ENCODE measurements at regions of chr7 and their contacts with region 1.

Region 1: GRCh38 chr7:90262438-90262837 is 17.5 kb downstream of the CFAP69 start:
- DNase-seq: peak; percentile 17 to 54 (median 52)
- H3K4me3 ChIP-seq: no peak overlapping the region
- H3K27ac ChIP-seq: no peak overlapping the region
- H3K4me1 ChIP-seq: no peaks in the 10 kb centered on the region
- H3K27me3 ChIP-seq: peaks cover 0 to 3% (median 0%) of the 10 kb centered on the region in 5 experiments

Region 2: GRCh38 chr7:90155206-90155605 is 107.2 kb before region 1 on chr7:
- CTCF ChIA-PET with region 1: interaction called, 11 read pairs
- POLR2A ChIA-PET with region 1: no interaction called
- DNase-seq: no peak
- H3K4me3 ChIP-seq: no peak overlapping the region
- H3K27ac ChIP-seq: no peak overlapping the region
- H3K4me1 ChIP-seq: peaks cover 0 to 7% (median 6%) of the 10 kb centered on the region in 4 experiments
- H3K27me3 ChIP-seq: peaks cover 0 to 5% (median 0%) of the 10 kb centered on the region in 5 experiments

Measured in common myeloid progenitor, CD34-positive (primary cell).